ENCODE measurements at regions of chr15 and their contacts with region 1.

Region 1: DNA sequence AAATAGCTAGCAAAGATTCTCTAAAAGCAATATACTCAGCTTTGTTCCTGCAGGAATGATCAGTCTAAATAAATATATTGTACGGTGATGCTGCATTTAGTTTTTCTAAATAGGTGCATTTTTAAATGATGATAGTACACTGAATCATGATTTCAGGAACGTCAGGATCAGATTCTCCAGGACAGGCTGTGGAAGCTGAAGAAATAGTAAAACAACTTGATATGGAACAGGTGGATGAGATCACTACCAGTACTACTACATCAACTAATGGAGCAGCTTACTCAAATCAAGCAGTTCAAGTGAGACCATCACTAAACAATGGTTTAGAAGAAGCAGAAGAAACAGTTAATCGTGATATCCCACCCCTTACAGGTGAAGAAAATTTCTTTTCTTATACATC is 46.3 kb upstream of the EIF3J start:
- DNase-seq: no peak
- ATAC-seq: no peak

Region 2: GRCh38 chr15:44435893-44436667 is 54.5 kb before region 1 on chr15:
- intact Hi-C with region 1: loop called (anchors 10 kb)
- DNase-seq: no peak
- ATAC-seq: no peak

Region 3: GRCh38 chr15:44570361-44570760 is 79.7 kb after region 1 on chr15:
- intact Hi-C with region 1: no loop called
- DNase-seq: no peak
- ATAC-seq: no peak

Measured in Right ventricle myocardium inferior (tissue), 1 donor.